Ovary (tissue), 10 donors: ENCODE measurements at regions of chr21 and their contacts with region 1.

Region 1: GRCh38 chr21:16534408-16535101 is 804.8 kb downstream of the USP25 start:
- DNase-seq: peak; percentile 84 to 92 (median 87)
- H3K4me3 ChIP-seq: peak overlapping the region; percentile 51
- H3K27ac ChIP-seq: peak overlapping the region in 1 of 2 donors; percentile 84
- H3K4me1 ChIP-seq: no peaks in the 10 kb centered on the region
- H3K27me3 ChIP-seq: no peaks in the 10 kb centered on the region
- CTCF ChIP-seq: no peak
- EP300 ChIP-seq: no peak
- POLR2A ChIP-seq: no peak

Region 2: DNA sequence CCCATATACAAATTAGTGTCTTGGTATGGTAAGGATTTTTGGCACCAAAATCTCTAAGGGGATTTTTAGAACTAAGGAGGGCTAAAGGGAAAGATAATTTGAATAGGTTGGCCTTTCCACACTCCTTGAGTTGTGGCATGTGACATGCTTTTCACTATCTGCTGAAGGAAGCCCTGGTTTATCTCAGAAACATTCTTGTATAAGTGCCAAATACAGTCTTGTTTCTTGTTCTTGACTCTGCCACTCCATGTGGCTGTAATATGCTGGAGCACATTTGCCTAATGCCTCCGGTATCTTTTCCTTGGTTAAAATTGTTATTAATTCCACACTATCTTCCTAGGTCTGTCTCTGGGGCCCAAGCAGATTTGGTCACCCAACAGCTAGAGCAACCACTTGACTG is 347.8 kb before region 1 on chr21:
- intact Hi-C with region 1: loop called in 1 of 4 experiments (anchors 10 kb)
- DNase-seq: no peak
- H3K4me3 ChIP-seq: no peak overlapping the region
- H3K27ac ChIP-seq: peak overlapping the region; percentile 31 to 62
- H3K4me1 ChIP-seq: peaks cover 4% of the 10 kb centered on the region
- H3K27me3 ChIP-seq: no peaks in the 10 kb centered on the region
- CTCF ChIP-seq: no peak
- EP300 ChIP-seq: no peak
- POLR2A ChIP-seq: no peak

Region 3: DNA sequence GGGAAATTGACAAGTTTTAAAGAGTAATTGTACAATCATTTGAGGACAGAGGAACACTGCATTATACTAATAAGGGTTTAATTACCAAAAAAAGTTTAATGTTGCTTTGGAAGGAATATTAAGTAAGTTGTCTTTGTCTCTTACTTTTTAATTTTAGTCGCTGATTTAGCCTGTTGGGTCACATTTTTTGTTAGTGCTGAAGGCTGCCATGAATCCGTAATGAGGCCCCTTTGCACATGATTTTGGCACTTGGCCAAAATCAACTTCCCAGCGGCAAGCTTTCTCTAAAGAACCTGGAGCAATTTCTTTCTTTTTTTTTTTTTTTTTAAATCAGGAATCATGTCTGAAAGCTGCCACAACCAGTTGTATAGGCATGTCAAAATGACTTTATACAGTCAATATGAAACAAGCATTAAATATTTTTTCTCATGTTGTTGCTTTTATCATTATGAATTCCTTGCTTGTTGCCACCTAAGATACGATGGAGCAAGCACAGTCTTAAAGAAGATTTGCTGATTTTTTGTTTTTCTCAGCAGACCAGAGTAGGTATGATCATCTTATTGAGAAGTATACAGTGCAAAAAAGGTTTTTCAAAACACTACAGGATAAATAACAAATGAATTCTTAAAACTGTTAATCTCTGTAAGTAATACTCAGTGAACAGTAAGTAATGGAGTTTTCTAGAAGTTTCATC is 114.4 kb before region 1 on chr21:
- intact Hi-C with region 1: loop called in 2 of 4 experiments (anchors 5 kb)
- DNase-seq: peak; percentile 53 to 74 (median 67)
- H3K4me3 ChIP-seq: peak overlapping the region; percentile 43
- H3K27ac ChIP-seq: peak overlapping the region; percentile 34 to 87
- H3K4me1 ChIP-seq: peaks cover 7% of the 10 kb centered on the region
- H3K27me3 ChIP-seq: no peaks in the 10 kb centered on the region
- CTCF ChIP-seq: no peak
- EP300 ChIP-seq: no peak
- POLR2A ChIP-seq: no peak

Region 4: DNA sequence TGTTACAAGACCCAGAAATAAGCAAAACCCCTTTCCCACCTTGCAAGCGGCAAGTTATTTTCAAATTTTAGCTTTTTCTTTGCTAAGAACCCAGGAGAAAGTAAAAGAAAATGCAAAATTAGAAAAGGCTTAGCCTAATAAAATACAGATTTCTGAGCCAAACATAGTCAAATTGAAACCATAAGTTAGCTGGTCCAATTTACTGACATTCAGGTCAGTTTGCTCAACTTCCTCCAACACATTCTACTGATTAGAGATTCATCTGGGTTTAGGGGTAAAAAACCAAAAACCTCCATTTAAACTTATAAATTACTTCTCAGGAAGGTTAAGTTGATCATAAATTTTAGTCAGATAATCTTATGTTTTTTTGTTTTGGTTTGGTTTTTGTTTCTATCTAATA is 276.5 kb after region 1 on chr21:
- intact Hi-C with region 1: no loop called
- DNase-seq: no peak
- H3K4me3 ChIP-seq: no peak overlapping the region
- H3K27ac ChIP-seq: no peak overlapping the region
- H3K4me1 ChIP-seq: no peaks in the 10 kb centered on the region
- H3K27me3 ChIP-seq: no peaks in the 10 kb centered on the region
- CTCF ChIP-seq: no peak
- EP300 ChIP-seq: no peak
- POLR2A ChIP-seq: no peak